ENCODE measurements at regions of chr3 and their contacts with region 1.

Region 1: GRCh38 chr3:16048435-16049318 is 125.8 kb upstream of the GALNT15 start:
- DNase-seq: peak; percentile 53 to 61
- ATAC-seq: peak; percentile 80 to 89
- H3K4me3 ChIP-seq: peak overlapping the region in 2 of 4 donors; percentile 29 to 47
- H3K27ac ChIP-seq: peak overlapping the region in 3 of 4 donors; percentile 1 to 87 (median 36)
- H3K4me1 ChIP-seq: peaks cover 4 to 20% of the 10 kb centered on the region in 2 donors
- H3K27me3 ChIP-seq: no peaks in the 10 kb centered on the region
- CTCF ChIP-seq: peak; percentile 77 to 88 (median 87)
- POLR2A ChIP-seq: no peak

Region 2: DNA sequence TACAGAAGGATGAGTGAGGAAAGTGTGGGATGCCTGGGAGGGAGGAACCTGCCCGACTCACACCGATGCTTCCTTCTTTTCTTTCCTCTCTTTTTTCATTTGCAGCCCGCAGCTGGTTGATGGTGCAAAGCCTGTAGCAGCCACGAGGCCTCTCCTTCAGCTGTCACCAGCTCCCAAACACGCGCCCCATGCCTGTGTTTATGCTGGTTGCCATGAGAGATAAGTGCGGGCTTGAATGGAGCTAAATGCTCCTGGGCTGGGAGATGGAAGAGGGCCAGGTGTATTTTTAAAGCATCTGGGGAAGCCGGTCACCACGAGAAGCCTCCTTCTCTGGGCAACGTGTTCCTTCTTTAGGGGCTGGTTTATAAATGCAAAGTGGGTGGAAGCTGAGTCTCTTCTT is 536.5 kb before region 1 on chr3:
- in situ Hi-C with region 1: no loop called
- intact Hi-C with region 1: no loop called
- DNase-seq: peak; percentile 61 to 79
- ATAC-seq: peak; percentile 78 to 90
- H3K4me3 ChIP-seq: no peak overlapping the region
- H3K27ac ChIP-seq: peak overlapping the region; percentile 73 to 92 (median 76)
- H3K4me1 ChIP-seq: peaks cover 17 to 36% of the 10 kb centered on the region in 2 donors
- H3K27me3 ChIP-seq: no peaks in the 10 kb centered on the region
- CTCF ChIP-seq: no peak
- POLR2A ChIP-seq: no peak

Region 3: DNA sequence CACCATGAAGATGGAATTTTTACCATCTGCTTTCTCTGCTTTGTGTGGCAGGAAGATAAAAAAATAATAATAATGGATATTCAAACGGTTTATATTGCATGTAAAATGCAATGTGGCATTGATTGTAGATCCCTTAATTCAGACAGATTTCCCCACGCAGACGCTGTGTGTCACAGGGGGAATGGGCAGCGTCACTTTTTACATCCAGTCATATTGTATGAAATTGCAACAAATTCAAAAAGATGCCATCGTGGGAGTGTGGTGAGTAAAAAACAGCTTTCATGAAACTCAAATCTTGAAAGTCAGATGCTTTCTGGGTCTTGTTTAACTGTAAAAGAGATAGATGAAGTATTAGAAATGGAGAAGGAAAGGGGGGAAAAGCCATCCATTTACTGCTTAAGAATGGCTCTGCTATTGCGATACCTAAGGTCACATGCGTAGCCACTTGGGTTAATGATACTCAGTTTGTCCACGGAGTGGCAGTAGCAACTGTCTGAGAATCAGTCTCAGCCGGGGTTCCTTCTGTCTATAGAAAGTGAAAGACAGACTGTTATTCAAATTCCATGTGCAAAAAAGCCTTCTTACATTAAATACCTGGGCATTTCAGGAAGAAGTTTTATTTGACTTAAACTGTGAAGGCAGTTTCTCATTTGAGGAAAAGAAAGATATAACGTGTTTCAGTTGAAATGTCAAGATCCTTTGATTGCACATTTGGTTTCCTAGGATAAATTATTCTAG is 418.6 kb before region 1 on chr3:
- in situ Hi-C with region 1: loop called in 3 of 4 experiments (anchors 25 kb)
- intact Hi-C with region 1: no loop called
- DNase-seq: peak; percentile 69 to 76
- ATAC-seq: peak; percentile 91 to 93
- H3K4me3 ChIP-seq: peak overlapping the region; percentile 24 to 50 (median 37)
- H3K27ac ChIP-seq: peak overlapping the region; percentile 77 to 90 (median 84)
- H3K4me1 ChIP-seq: peaks cover 25 to 27% of the 10 kb centered on the region in 2 donors
- H3K27me3 ChIP-seq: no peaks in the 10 kb centered on the region
- CTCF ChIP-seq: peak; percentile 77 to 85 (median 78)
- POLR2A ChIP-seq: no peak

Region 4: DNA sequence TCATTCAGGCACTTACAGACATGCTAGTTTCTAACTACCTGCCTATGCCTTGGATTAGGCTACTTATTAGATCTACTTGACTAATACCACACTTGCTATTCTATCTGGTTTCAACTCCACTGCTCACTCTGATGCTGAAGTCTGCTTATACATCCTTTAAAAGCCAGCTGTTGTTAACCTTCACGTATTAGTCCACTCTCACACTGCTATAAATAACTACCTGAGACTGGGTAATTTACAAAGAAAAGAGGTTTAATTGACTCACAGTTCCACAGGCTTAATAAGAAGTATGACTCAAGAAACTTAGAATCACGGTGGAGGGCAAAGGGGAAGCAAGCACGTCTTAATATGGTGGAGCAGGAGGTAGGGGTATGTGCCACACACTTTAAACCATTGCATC is 203.2 kb before region 1 on chr3:
- in situ Hi-C with region 1: loop called in 1 of 4 experiments (anchors 25 kb)
- intact Hi-C with region 1: no loop called
- DNase-seq: no peak
- ATAC-seq: no peak
- H3K4me3 ChIP-seq: no peak overlapping the region
- H3K27ac ChIP-seq: peak overlapping the region in 3 of 4 donors; percentile 3 to 57 (median 35)
- H3K4me1 ChIP-seq: peaks cover 24 to 34% of the 10 kb centered on the region in 2 donors
- H3K27me3 ChIP-seq: no peaks in the 10 kb centered on the region
- CTCF ChIP-seq: no peak
- POLR2A ChIP-seq: no peak

Region 5: GRCh38 chr3:16240283-16241023 is 191.8 kb after region 1 on chr3:
- in situ Hi-C with region 1: loop called (anchors 5 to 10 kb)
- intact Hi-C with region 1: no loop called
- DNase-seq: no peak
- ATAC-seq: peak; percentile 36 to 40
- H3K4me3 ChIP-seq: no peak overlapping the region
- H3K27ac ChIP-seq: peak overlapping the region; percentile 43 to 64 (median 57)
- H3K4me1 ChIP-seq: peaks cover 25 to 26% of the 10 kb centered on the region in 2 donors
- H3K27me3 ChIP-seq: no peaks in the 10 kb centered on the region
- CTCF ChIP-seq: no peak
- POLR2A ChIP-seq: no peak

Region 6: DNA sequence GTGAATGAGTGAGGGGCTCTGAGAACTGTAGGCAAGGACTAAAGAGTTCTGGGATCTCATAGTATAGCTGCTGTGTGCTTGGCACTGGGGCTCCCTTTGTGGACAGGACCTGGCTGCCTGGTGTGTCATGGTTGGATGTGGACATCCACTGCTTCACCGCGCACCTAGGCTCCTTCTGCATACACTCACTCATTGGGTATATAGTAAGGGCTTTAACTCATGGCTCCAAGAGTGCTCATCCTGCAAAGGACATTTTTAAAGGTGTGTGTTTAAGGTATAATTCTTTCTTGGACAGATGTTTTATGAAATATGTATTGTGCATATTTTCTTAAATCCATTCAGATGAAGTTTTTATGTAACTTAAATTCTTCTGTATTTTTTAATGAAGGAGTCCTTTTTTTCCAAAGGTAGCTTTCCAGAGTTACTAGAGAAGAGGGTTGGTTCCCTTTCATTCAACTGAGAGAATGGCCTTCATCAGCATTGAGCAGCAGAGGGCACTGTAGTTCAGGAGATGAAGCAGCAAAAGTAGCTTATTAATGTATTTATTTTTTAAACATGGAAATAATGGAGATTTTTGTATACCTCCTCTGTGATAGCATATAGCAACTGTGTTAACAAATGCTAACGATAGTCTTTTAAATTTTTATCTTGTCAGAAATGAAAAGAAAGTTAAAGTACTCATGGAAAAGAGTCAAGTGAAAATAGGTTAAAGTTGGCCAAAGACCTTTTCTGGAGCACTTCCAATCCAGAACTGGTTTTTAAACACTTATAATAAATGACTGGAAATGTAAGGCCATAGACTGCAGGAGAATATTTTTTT is 241.5 kb after region 1 on chr3:
- in situ Hi-C with region 1: no loop called
- intact Hi-C with region 1: no loop called
- DNase-seq: peak in 1 of 2 donors; percentile 26
- ATAC-seq: no peak
- H3K4me3 ChIP-seq: no peak overlapping the region
- H3K27ac ChIP-seq: peak overlapping the region in 3 of 4 donors; percentile 75 to 83 (median 76)
- H3K4me1 ChIP-seq: peaks cover 50 to 57% of the 10 kb centered on the region in 2 donors
- H3K27me3 ChIP-seq: no peaks in the 10 kb centered on the region
- CTCF ChIP-seq: peak; percentile 60 to 83 (median 79)
- POLR2A ChIP-seq: no peak

Region 7: GRCh38 chr3:16496408-16497222 is 447.9 kb after region 1 on chr3:
- in situ Hi-C with region 1: no loop called
- intact Hi-C with region 1: no loop called
- DNase-seq: no peak
- ATAC-seq: no peak
- H3K4me3 ChIP-seq: no peak overlapping the region
- H3K27ac ChIP-seq: no peak overlapping the region
- H3K4me1 ChIP-seq: peaks cover 0 to 15% of the 10 kb centered on the region in 2 donors
- H3K27me3 ChIP-seq: no peaks in the 10 kb centered on the region
- CTCF ChIP-seq: no peak
- POLR2A ChIP-seq: no peak

Region 8: GRCh38 chr3:16550676-16551341 is 502.1 kb after region 1 on chr3:
- in situ Hi-C with region 1: loop called in 1 of 4 experiments (anchors 25 kb)
- intact Hi-C with region 1: loop called (anchors 10 kb)
- DNase-seq: peak; percentile 50 to 61
- ATAC-seq: peak; percentile 88 to 96
- H3K4me3 ChIP-seq: peak overlapping the region in 2 of 4 donors; percentile 11 to 21
- H3K27ac ChIP-seq: peak overlapping the region in 2 of 4 donors; percentile 37 to 43
- H3K4me1 ChIP-seq: peaks cover 0 to 18% of the 10 kb centered on the region in 2 donors
- H3K27me3 ChIP-seq: no peaks in the 10 kb centered on the region
- CTCF ChIP-seq: peak; percentile 80 to 94 (median 88)
- POLR2A ChIP-seq: no peak

Region 9: DNA sequence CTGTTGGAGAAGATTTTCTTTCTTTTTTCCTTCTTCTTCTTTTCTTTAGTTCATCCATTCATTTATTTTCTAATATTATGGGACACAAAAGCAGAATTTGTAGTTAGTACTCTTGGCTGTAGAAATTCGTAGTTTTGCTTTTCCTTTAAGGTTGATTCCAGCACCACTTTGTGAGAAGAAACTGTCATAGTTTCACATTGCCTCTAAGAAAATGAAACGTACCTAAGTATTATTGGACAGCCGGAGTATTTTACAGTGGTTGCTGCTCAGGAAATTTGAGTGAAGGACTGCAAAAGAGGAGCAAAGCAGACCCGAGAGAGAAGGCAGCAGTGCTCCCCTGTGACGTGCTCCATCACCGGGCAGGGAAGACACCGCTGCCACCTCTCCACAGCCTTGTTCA is 884.2 kb after region 1 on chr3:
- in situ Hi-C with region 1: no loop called
- intact Hi-C with region 1: no loop called
- DNase-seq: no peak
- ATAC-seq: no peak
- H3K4me3 ChIP-seq: no peak overlapping the region
- H3K27ac ChIP-seq: peak overlapping the region in 1 of 4 donors; percentile 15
- H3K4me1 ChIP-seq: peaks cover 62 to 71% of the 10 kb centered on the region in 2 donors
- H3K27me3 ChIP-seq: no peaks in the 10 kb centered on the region
- CTCF ChIP-seq: no peak
- POLR2A ChIP-seq: no peak